ENCODE measurements at regions of chr17 and their contacts with region 1.

Region 1: DNA sequence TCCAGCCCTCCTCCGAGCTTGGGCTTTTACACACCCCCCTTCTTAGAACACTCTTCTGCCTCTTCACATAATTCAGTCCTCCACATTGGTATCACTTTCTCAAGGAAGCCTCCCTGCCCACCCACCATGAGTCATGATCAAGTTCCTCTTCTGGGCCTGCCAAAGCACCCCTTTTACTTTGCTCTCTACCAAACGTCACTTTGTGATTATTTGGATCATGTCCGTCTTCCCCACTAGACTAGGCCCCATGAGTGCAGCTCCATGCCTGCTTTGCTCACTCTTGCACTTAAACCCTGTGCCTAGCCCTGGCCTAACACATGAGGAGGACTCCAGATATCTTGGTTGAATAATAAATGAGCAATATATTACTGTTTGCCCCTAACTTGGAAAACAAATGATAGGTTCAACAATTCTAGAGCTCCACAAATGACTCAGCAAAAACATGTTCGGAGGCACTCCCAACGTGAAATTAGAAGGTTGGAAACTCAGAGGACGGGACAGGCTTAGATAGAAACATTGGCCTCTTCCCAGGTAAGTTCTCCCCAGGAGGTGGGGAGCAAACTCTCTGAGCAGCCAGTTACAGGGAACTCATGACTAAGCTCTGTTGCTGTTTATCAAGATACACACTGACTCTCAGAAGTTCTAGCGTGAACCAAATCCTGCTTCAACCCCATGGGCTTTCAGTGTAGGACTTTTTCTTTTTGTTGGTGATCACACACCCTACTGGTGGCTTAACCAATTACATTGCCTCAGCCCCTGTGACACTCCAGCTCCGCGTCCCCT is 28.3 kb downstream of the G6PC1 start:
- DNase-seq: peak; percentile 70
- H3K4me3 Mint-ChIP-seq: no peak overlapping the region
- H3K27ac Mint-ChIP-seq: peak overlapping the region; percentile 25
- H3K4me1 Mint-ChIP-seq: peaks cover 10% of the 10 kb centered on the region
- H3K27me3 Mint-ChIP-seq: peaks cover 2% of the 10 kb centered on the region

Region 2: DNA sequence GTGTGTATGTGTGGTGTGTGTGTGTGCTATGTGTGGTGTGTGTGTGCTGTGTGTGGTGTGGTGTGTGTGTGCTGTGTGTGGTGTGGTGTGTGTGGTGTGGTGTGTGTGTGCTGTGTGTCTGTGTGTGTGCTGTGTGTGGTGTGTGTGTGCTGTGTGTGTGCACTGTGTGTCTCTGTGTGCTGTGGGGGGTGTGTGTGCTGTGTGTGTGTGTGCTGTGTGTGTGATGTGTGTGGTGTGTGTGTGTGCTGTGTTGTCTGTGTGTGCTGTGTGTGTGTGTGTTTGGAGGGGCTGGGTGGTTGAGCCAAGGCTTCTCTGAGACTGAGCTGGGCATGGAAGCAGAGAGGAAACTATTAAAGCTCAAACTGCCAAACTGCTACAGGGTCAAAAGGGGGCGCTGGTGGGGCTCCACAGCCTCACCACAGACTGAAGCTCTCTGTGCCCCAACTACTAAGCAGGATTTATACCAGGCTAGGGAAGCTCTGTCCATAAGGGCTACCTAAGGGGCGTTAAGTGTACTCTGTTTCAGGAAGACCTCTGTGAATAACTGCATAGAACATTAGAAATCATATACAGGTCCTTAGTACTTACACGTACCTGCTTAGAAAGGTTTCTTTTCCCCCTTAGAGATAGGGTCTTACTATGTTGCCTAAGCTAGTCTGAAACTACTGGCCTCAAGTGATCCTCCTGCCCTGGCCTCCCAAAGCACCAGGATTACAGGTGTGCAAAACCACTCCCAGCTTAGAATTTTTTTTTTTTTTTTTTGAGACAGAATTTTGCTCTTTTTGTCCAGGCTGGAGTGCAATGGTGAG is 706.8 kb before region 1 on chr17:
- intact Hi-C with region 1: no loop called
- DNase-seq: peak; percentile 85
- H3K4me3 Mint-ChIP-seq: no peak overlapping the region
- H3K27ac Mint-ChIP-seq: peak overlapping the region; percentile 27
- H3K4me1 Mint-ChIP-seq: peaks cover 7% of the 10 kb centered on the region
- H3K27me3 Mint-ChIP-seq: no peaks in the 10 kb centered on the region

Region 3: GRCh38 chr17:42843358-42843934 is 85.5 kb before region 1 on chr17:
- intact Hi-C with region 1: loop called (anchors 5 kb)
- DNase-seq: peak; percentile 67
- H3K4me3 Mint-ChIP-seq: no peak overlapping the region
- H3K27ac Mint-ChIP-seq: no peak overlapping the region
- H3K4me1 Mint-ChIP-seq: peaks cover 12% of the 10 kb centered on the region
- H3K27me3 Mint-ChIP-seq: no peaks in the 10 kb centered on the region

Region 4: DNA sequence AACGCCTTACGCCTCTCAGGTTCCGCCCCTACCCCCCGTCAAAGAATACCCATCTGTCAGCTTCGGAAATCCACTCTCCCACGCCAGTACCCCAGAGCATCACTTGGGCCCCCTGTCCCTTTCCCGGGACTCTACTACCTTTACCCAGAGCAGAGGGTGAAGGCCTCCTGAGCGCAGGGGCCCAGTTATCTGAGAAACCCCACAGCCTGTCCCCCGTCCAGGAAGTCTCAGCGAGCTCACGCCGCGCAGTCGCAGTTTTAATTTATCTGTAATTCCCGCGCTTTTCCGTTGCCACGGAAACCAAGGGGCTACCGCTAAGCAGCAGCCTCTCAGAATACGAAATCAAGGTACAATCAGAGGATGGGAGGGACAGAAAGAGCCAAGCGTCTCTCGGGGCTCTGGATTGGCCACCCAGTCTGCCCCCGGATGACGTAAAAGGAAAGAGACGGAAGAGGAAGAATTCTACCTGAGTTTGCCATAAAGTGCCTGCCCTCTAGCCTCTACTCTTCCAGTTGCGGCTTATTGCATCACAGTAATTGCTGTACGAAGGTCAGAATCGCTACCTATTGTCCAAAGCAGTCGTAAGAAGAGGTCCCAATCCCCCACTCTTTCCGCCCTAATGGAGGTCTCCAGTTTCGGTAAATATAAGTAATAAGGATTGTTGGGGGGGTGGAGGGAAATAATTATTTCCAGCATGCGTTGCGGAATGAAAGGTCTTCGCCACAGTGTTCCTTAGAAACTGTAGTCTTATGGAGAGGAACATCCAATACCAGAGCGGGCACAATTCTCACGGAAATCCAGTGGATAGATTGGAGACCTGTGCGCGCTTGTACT is 196.4 kb after region 1 on chr17 and contains the start of gene BRCA1:
- intact Hi-C with region 1: no loop called
- DNase-seq: peak; percentile 99
- H3K4me3 Mint-ChIP-seq: peak within 1 kb of the TSS; percentile 100
- H3K27ac Mint-ChIP-seq: peak within 1 kb of the TSS; percentile 99
- H3K4me1 Mint-ChIP-seq: peaks cover 29% of the 10 kb centered on the region
- H3K27me3 Mint-ChIP-seq: no peaks in the 10 kb centered on the region
- total RNA-seq, gene BRCA1: 88.1 and 93.3 TPM in 2 replicates